ENCODE measurements at regions of chr2 and their contacts with region 1.

Region 1: DNA sequence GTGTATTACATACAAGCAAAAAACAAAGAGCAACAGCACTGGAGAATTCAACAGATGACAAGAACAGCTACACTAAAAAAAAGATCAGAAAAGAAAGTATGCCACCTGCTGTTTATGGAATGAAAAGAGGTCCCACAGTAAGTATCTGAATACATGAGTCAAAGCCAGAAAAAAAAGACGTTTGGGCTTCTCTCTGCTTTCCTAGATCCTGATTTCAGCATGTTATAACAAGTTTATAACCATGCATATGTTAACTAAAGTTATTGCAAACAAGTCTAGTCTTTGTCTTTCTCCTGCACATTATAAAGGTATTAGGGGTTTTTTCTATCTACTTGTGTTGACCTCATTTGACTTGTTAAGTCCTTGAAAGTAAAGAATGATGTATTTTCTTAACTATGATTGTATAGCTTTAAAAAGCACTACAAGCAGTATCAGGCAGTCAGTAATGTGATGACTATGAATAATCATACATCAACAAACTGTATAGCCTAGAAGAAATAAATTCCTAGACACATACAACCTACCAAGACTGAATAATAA is 108.5 kb upstream of the COL5A2 start:
- DNase-seq: peak; percentile 84
- ATAC-seq: peak; percentile 87
- H3K4me3 ChIP-seq: no peak overlapping the region
- H3K27ac ChIP-seq: peak overlapping the region; percentile 38
- H3K4me1 ChIP-seq: peaks cover 35% of the 10 kb centered on the region
- H3K27me3 ChIP-seq: no peaks in the 10 kb centered on the region
- CTCF ChIP-seq: peak; percentile 93

Region 2: GRCh38 chr2:189096769-189097447 is 191.1 kb before region 1 on chr2:
- CTCF ChIA-PET with region 1: no interaction called
- POLR2A ChIA-PET with region 1: no interaction called
- intact Hi-C with region 1: loop called (anchors 1 kb)
- DNase-seq: peak; percentile 88
- ATAC-seq: peak; percentile 86
- H3K4me3 ChIP-seq: no peak overlapping the region
- H3K27ac ChIP-seq: peak overlapping the region; percentile 22
- H3K4me1 ChIP-seq: peaks cover 34% of the 10 kb centered on the region
- H3K27me3 ChIP-seq: no peaks in the 10 kb centered on the region
- CTCF ChIP-seq: no peak

Region 3: GRCh38 chr2:189115126-189115525 is 172.9 kb before region 1 on chr2:
- CTCF ChIA-PET with region 1: no interaction called
- POLR2A ChIA-PET with region 1: interaction called, 16 read pairs
- intact Hi-C with region 1: loop called (anchors 1 kb)
- DNase-seq: peak; percentile 57
- ATAC-seq: peak; percentile 33
- H3K4me3 ChIP-seq: no peak overlapping the region
- H3K27ac ChIP-seq: peak overlapping the region; percentile 15; the same call in 1 of the 2 replicates
- H3K4me1 ChIP-seq: peaks cover 18% of the 10 kb centered on the region
- H3K27me3 ChIP-seq: no peaks in the 10 kb centered on the region
- CTCF ChIP-seq: peak; percentile 59

Region 4: DNA sequence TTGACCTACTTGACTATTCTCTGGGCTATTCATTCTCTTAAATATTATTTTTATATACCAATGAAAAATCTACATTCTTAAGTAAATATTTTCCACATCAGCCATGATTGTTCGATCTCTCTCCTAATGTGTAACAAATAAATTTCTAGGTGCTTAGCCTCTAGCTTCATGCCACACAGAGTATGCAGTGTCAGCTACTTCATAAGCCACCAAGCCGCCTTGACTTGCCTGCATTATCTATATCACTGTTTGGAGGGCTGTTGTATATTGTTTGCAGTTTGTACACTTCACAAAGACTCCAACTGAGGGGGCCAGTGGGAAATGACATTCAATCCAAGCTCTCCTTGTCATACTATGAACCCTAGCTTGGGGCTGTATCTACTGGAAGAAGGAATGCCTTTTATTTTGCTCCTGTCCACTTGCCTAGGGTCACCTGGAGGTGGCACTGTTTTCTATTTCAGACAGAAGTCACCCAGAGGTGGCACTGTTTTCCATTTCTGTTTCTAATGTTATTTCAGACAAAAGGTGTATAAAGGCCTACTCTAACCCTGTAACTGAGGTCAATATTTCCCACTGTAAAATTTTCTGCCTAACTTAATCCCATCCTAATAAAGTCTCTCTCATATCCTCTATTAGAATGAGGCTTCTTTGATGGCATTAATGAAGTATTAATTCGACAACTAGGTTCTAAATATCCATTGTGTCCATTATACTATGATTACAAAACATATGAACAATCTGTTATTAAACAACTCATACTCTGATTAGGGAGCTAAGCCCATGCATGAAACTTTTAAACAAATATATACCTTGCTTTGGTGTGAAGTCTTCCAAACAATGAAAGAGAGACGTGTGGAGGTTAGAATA is 144.9 kb before region 1 on chr2:
- CTCF ChIA-PET with region 1: interaction called, 3 read pairs
- POLR2A ChIA-PET with region 1: no interaction called
- intact Hi-C with region 1: loop called (anchors 1 kb)
- DNase-seq: peak; percentile 76
- ATAC-seq: peak; percentile 73
- H3K4me3 ChIP-seq: no peak overlapping the region
- H3K27ac ChIP-seq: no peak overlapping the region
- H3K4me1 ChIP-seq: no peaks in the 10 kb centered on the region
- H3K27me3 ChIP-seq: no peaks in the 10 kb centered on the region
- CTCF ChIP-seq: peak; percentile 99

Region 5: GRCh38 chr2:189252991-189253675 is 34.9 kb before region 1 on chr2:
- CTCF ChIA-PET with region 1: no interaction called
- POLR2A ChIA-PET with region 1: no interaction called
- intact Hi-C with region 1: loop called (anchors 2 kb)
- DNase-seq: peak; percentile 74
- ATAC-seq: peak; percentile 70
- H3K4me3 ChIP-seq: no peak overlapping the region
- H3K27ac ChIP-seq: peak overlapping the region; percentile 63
- H3K4me1 ChIP-seq: peaks cover 36% of the 10 kb centered on the region
- H3K27me3 ChIP-seq: no peaks in the 10 kb centered on the region
- CTCF ChIP-seq: no peak

Measured in PC-3 (cell line).